CD8-positive, alpha-beta T cell (primary cell): ENCODE measurements at regions of chr21 and their contacts with region 1.

Region 1: GRCh38 chr21:42079939-42080787 is 9.0 kb downstream of the UMODL1 start:
- DNase-seq: no peak
- ATAC-seq: no peak
- H3K4me3 ChIP-seq: no peak overlapping the region
- H3K4me3 Mint-ChIP-seq: no peak overlapping the region
- H3K27ac ChIP-seq: no peak overlapping the region
- H3K27ac Mint-ChIP-seq: no peak overlapping the region
- H3K4me1 ChIP-seq: no peaks in the 10 kb centered on the region
- H3K4me1 Mint-ChIP-seq: no peaks in the 10 kb centered on the region
- H3K27me3 ChIP-seq: no peaks in the 10 kb centered on the region
- H3K27me3 Mint-ChIP-seq: no peaks in the 10 kb centered on the region
- CTCF ChIP-seq: no peak

Region 2: DNA sequence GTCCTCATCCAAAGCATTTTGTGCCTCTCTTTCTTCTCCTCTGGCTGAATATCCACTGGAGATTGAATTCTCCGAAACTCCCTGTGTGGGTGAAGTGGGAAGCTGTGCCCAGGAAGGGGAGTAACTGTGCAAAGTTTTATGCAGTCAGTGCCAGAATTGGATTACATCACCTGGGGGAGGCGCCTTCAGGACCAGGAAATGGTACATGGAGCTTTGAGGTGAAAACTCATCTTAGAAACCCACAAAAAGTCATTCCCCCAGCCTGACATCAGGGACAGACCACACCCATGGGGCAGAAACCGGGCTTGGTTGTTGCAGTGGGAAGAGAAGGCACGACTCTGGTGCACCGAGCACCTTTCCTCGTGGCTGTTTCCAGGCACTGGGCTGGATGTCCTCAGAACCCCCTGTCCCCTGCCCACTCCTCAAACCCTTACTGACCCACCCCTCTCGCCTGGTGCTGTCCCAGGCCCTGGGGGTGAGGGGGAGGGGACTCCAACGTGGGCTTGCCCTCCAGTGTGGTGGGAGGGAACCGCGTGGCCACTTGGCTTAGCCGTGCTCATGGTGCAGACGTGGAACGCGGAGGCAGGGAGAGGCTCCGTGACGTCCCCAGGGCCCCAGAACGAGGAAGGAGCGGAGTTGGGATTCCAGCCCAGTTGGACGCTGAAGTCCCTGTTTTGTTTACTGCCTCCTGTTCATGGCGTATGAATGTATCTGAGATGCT is 219.3 kb after region 1 on chr21:
- CTCF ChIA-PET with region 1: no interaction called
- POLR2A ChIA-PET with region 1: no interaction called
- intact Hi-C with region 1: no loop called
- DNase-seq: peak in 1 of 9 experiments; percentile 53
- ATAC-seq: peak; percentile 54
- H3K4me3 ChIP-seq: no peak overlapping the region
- H3K4me3 Mint-ChIP-seq: no peak overlapping the region
- H3K27ac ChIP-seq: no peak overlapping the region
- H3K27ac Mint-ChIP-seq: no peak overlapping the region
- H3K4me1 ChIP-seq: peaks cover 8% of the 10 kb centered on the region
- H3K4me1 Mint-ChIP-seq: peaks cover 7% of the 10 kb centered on the region
- H3K27me3 ChIP-seq: no peaks in the 10 kb centered on the region
- H3K27me3 Mint-ChIP-seq: no peaks in the 10 kb centered on the region
- CTCF ChIP-seq: no peak

Region 3: DNA sequence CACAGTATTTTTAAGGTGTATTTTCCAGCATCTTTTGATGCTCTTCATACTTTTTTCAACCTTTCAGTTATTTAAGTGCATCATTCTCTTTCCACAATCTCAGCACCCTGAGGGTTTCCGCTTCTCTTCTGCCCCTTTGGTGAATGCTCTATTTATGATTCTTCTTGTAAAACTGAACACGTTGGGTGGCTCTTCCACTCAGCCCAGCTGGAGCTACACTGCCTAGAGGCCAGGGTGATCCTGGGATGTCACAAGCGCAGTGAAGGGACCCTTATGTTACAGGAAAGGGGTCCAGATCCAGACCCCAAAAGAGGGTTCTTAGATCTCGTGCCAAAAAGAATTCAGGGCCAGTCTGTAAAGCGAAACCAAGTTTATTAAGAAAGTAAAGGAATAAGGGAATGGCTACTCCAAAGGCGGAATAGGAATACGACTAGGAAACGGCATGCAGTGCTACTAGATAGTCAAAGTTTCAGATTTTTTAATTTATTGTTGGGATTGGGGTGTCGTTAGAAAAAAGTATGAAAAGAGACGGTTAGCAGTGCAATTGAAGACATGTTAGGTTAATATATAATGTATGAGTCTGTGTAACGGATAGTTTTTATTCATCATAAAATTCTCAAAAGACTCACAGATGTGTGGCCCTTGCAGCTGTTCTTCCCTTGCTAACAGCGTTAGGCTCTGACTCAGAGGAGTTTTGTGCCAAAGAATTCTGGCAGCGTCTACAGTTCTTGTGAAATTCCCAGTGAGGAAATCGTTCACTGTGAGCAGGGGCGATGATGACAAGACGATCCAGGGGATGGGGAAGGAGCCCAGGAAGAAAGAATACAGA is 859.6 kb after region 1 on chr21:
- CTCF ChIA-PET with region 1: no interaction called
- POLR2A ChIA-PET with region 1: no interaction called
- intact Hi-C with region 1: loop called (anchors 5 kb)
- DNase-seq: no peak
- ATAC-seq: no peak
- H3K4me3 ChIP-seq: no peak overlapping the region
- H3K4me3 Mint-ChIP-seq: no peak overlapping the region
- H3K27ac ChIP-seq: no peak overlapping the region
- H3K27ac Mint-ChIP-seq: no peak overlapping the region
- H3K4me1 ChIP-seq: no peaks in the 10 kb centered on the region
- H3K4me1 Mint-ChIP-seq: no peaks in the 10 kb centered on the region
- H3K27me3 ChIP-seq: no peaks in the 10 kb centered on the region
- H3K27me3 Mint-ChIP-seq: no peaks in the 10 kb centered on the region
- CTCF ChIP-seq: no peak